Common myeloid progenitor, CD34-positive (primary cell): ENCODE measurements at regions of chr13 and their contacts with region 1.

Region 1: DNA sequence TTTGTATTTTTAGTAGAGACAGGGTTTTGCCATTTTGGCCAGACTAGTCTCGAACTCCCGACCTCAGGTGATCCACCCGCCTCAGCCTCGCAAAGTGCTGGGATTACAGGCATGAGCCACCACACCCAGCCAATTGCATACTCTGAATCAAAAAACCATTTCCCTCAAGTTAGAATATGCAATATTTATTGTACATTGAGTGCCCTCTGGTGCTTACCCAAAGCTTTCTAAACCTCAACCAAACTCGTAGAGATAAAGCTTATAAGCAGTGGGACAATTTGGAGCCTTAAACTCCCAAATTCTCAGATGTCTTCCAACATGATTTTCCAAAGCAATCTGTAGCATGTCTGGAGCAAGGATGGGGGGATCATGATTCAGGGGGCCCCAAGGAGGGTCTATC is 22.4 kb downstream of the RFXAP start:
- DNase-seq: peak; percentile 25 to 44 (median 34)
- H3K4me3 ChIP-seq: no peak overlapping the region
- H3K27ac ChIP-seq: no peak overlapping the region
- H3K4me1 ChIP-seq: peaks cover 0 to 10% (median 4%) of the 10 kb centered on the region in 4 experiments
- H3K27me3 ChIP-seq: no peaks in the 10 kb centered on the region

Region 2: DNA sequence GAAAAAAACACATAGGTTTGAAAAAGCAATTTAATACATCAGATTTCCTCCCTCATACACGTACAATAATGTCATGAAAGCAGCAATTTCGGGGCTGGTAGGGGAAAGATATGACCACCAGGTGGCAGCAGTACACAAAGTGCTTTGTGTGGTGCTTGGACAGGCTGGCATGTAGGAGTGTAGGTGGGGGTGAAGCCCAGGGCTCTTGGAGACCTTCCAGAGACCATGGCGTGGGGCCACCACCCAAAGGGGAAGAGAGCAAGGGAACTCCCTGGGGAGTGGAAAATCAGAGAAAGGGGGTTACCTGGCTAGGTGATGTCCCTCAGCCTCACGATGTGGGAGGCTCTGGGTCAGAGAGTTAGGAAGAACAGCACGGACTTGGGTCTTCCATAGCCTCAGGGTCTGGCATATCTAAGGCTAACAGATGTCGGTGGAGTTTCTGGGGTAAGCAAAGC is 420.9 kb before region 1 on chr13:
- CTCF ChIA-PET with region 1: interaction called, 22 read pairs
- POLR2A ChIA-PET with region 1: no interaction called
- DNase-seq: peak; percentile 86 to 94 (median 92)
- H3K4me3 ChIP-seq: peak overlapping the region in 1 of 7 experiments; percentile 43
- H3K27ac ChIP-seq: no peak overlapping the region
- H3K4me1 ChIP-seq: peaks cover 21 to 47% (median 31%) of the 10 kb centered on the region in 4 experiments
- H3K27me3 ChIP-seq: no peaks in the 10 kb centered on the region

Region 3: DNA sequence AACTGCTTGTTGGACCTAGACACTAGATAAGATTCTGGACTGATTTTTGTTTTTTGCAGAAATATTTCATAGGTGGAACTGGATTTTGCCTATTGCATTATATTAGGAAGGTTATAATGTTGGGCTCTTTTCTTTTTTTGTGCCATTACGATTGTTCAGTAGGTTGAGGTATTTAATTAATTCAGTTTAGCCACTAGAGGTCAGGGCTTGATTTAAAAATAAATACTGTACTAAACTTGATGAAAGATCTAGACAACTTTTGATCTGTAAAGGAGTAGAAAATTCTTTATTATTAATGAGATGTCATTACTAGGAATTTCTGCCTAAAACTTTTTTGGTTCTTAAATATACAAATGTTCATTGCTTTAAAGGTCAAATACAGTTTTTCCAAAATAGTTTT is 233.3 kb after region 1 on chr13:
- CTCF ChIA-PET with region 1: no interaction called
- POLR2A ChIA-PET with region 1: no interaction called
- DNase-seq: peak; percentile 22 to 56 (median 55)
- H3K4me3 ChIP-seq: no peak overlapping the region
- H3K27ac ChIP-seq: no peak overlapping the region
- H3K4me1 ChIP-seq: peaks cover 0 to 5% (median 3%) of the 10 kb centered on the region in 4 experiments
- H3K27me3 ChIP-seq: no peaks in the 10 kb centered on the region